Activated B cell treated with CpG ODN at 0.5 μM for 24 hours (primary cell): ENCODE measurements at regions of chr2 and their contacts with region 1.

Region 1: GRCh38 chr2:101697124-101698013 is at the start of gene MAP4K4:
- DNase-seq: peak; percentile 71
- ATAC-seq: peak; percentile 71
- H3K4me3 Mint-ChIP-seq: peak within 1 kb of the TSS; percentile 92
- H3K27ac Mint-ChIP-seq: peak within 1 kb of the TSS; percentile 91
- H3K4me1 Mint-ChIP-seq: peaks cover 8% of the 10 kb centered on the region
- H3K27me3 Mint-ChIP-seq: no peaks in the 10 kb centered on the region
- CTCF ChIP-seq: no peak
- total RNA-seq, gene MAP4K4: 211 and 232 TPM in 2 replicates

Region 2: DNA sequence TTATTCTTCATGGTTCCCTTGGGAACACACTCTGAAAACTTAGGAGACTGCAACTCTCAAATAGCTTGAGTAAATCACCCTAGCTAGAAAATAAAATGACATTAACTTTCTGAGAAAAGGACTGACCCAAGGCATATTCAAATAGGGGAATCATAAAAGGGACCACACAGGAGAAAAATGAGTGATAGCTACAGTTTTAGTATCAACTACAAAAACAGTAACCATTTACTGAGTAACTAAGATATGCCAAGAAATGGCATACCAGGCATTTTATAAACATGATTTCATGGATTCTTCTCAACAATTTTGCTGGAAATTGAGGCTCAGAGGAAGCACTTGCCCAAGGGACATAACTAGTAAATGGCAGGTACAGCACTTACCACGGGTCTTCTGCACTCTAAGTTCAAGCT is 1639.5 kb before region 1 on chr2:
- CTCF ChIA-PET with region 1: no interaction called
- POLR2A ChIA-PET with region 1: no interaction called
- intact Hi-C with region 1: no loop called
- DNase-seq: no peak
- ATAC-seq: no peak
- H3K4me3 Mint-ChIP-seq: no peak overlapping the region
- H3K27ac Mint-ChIP-seq: peak overlapping the region; percentile 35
- H3K4me1 Mint-ChIP-seq: peaks cover 69% of the 10 kb centered on the region
- H3K27me3 Mint-ChIP-seq: no peaks in the 10 kb centered on the region
- CTCF ChIP-seq: no peak

Region 3: GRCh38 chr2:101308432-101309210 is 388.7 kb before region 1 on chr2 and contains the start of gene RNF149:
- CTCF ChIA-PET with region 1: no interaction called
- POLR2A ChIA-PET with region 1: no interaction called
- intact Hi-C with region 1: loop called (anchors 5 kb)
- DNase-seq: peak; percentile 97
- ATAC-seq: peak; percentile 79
- H3K4me3 Mint-ChIP-seq: peak within 1 kb of the TSS; percentile 85
- H3K27ac Mint-ChIP-seq: peak within 1 kb of the TSS; percentile 90
- H3K4me1 Mint-ChIP-seq: peaks cover 54% of the 10 kb centered on the region
- H3K27me3 Mint-ChIP-seq: no peaks in the 10 kb centered on the region
- CTCF ChIP-seq: no peak
- total RNA-seq, gene RNF149: 39.6 and 48.3 TPM in 2 replicates

Region 4: GRCh38 chr2:101419096-101419663 is 278.2 kb before region 1 on chr2:
- CTCF ChIA-PET with region 1: interaction called, 5 read pairs
- POLR2A ChIA-PET with region 1: interaction called, 3 read pairs
- intact Hi-C with region 1: loop called (anchors 2 kb)
- DNase-seq: no peak
- ATAC-seq: peak; percentile 88
- H3K4me3 Mint-ChIP-seq: no peak overlapping the region
- H3K27ac Mint-ChIP-seq: no peak overlapping the region
- H3K4me1 Mint-ChIP-seq: peaks cover 6% of the 10 kb centered on the region
- H3K27me3 Mint-ChIP-seq: no peaks in the 10 kb centered on the region
- CTCF ChIP-seq: no peak

Region 5: DNA sequence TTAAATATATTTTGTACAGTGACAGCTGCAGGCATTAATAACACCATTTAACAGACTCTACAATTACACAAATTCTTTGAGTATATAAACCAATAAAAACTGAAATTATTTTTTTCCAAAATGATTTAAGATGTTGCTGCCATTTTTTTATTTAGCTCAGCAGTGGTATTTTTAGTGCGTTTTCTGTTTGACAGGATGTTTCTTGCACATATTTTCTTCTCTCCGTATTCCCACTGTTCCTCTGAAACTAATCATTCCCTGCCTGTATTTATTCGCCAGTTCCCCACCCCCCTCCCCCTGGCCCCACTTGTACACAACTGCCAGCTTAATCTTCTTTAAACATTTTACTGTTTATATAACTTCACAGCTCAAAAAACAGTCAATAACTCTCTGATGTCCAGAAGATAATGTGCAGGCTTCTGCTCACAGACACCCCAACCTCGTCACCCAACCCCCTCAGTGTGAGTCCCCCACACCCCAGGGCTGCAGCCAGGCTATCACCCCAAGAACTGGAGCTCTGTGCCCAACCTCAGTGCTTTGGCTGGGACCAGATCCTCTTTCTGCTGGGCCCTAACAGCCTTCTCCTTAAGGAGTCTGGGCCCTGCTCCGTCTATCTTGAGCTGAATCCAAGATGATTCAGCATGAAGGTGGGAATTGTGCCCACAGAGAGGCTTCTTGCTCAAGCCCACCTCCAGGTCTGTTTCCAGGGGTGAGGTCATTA is 41.5 kb before region 1 on chr2:
- CTCF ChIA-PET with region 1: no interaction called
- POLR2A ChIA-PET with region 1: interaction called, 6 read pairs
- intact Hi-C with region 1: loop called (anchors 2 kb)
- DNase-seq: no peak
- ATAC-seq: no peak
- H3K4me3 Mint-ChIP-seq: no peak overlapping the region
- H3K27ac Mint-ChIP-seq: peak overlapping the region; percentile 41
- H3K4me1 Mint-ChIP-seq: peaks cover 26% of the 10 kb centered on the region
- H3K27me3 Mint-ChIP-seq: no peaks in the 10 kb centered on the region
- CTCF ChIP-seq: no peak

Region 6: DNA sequence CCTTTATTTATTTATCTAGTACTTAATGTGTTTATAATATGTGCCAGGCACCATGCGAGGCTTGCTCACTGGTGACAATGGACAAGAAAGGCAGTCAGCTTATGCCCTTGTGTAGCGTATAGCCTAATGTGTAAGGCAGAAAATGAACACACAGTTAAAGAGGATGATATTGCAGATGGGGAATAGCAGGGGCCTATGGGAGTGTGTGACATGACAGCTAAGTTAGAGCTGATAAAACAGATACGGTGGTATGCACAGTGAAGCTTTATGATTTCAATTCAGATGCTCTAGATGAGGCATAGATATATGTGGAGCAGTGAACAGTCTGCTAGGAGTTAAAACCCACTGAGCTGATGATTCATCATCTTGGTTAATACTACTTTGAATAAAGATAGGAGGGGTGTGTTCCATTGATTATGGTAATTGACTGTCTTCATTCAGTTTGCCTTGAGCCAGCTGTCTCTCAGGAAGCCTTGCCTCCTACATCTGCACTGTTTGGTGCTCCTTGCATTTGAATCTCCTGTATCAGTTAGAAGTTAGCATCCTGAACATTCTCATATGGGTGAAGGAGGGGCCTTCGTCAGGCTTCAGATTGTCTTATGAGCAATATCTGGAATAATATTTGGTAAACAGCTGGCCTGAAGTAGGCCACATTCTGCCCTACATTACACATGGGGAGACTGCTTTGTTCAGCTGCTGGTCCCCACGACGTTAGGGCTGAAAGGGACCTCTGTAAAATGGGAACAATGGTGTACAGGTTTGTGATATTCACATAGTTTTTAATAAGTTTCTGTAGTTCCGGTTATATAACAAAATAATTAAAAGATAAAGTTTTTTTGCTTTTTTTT is 13.3 kb after region 1 on chr2:
- CTCF ChIA-PET with region 1: interaction called, 3 read pairs
- POLR2A ChIA-PET with region 1: interaction called, 87 read pairs
- intact Hi-C with region 1: loop called (anchors 1 kb)
- DNase-seq: no peak
- ATAC-seq: peak; percentile 78
- H3K4me3 Mint-ChIP-seq: peak overlapping the region; percentile 65
- H3K27ac Mint-ChIP-seq: peak overlapping the region; percentile 85
- H3K4me1 Mint-ChIP-seq: peaks cover 53% of the 10 kb centered on the region
- H3K27me3 Mint-ChIP-seq: no peaks in the 10 kb centered on the region
- CTCF ChIP-seq: no peak

Region 7: DNA sequence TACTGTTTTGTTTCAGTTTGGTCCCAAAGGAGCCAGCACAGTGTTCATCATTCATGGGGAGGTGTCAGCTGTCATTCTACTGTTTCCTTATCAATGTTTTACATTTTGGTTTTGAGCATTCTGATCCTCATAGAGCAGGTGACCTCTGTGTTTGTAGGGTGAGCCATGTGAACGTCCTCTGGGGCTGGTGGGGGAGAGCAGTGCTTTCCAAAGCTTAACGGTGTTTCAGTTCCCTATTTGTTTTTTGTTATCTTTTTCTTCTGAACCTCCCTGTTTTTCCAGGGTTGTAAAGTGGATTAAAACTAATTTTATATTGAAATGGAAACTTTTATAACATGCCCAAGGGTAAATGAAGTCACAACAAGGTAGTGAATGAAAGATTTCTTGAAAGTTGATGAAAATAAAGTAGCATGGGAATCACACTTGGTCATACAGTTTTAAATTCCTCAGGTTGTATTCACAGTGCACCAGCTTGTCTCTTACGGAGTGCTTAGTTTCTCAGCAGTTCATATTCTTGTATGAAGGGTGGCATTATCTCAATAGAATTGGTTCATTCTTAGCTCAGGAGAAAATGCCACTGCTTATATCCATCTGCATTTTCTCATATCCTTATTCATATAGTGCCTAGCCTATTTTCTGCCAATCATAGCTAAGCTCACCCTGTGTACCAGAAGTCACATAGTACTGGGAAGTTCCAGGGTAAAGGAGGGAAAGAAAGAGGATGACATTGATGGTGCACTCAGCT is 54.7 kb after region 1 on chr2:
- CTCF ChIA-PET with region 1: no interaction called
- POLR2A ChIA-PET with region 1: interaction called, 7 read pairs
- intact Hi-C with region 1: loop called (anchors 2 kb)
- DNase-seq: no peak
- ATAC-seq: peak; percentile 83
- H3K4me3 Mint-ChIP-seq: peak overlapping the region; percentile 65
- H3K27ac Mint-ChIP-seq: peak overlapping the region; percentile 76
- H3K4me1 Mint-ChIP-seq: peaks cover 81% of the 10 kb centered on the region
- H3K27me3 Mint-ChIP-seq: no peaks in the 10 kb centered on the region
- CTCF ChIP-seq: no peak

Region 8: GRCh38 chr2:101831351-101831865 is 134.0 kb after region 1 on chr2:
- CTCF ChIA-PET with region 1: interaction called, 6 read pairs
- POLR2A ChIA-PET with region 1: interaction called, 5 read pairs
- intact Hi-C with region 1: loop called (anchors 2 kb)
- DNase-seq: peak; percentile 37
- ATAC-seq: peak; percentile 82
- H3K4me3 Mint-ChIP-seq: no peak overlapping the region
- H3K27ac Mint-ChIP-seq: peak overlapping the region; percentile 56
- H3K4me1 Mint-ChIP-seq: peaks cover 49% of the 10 kb centered on the region
- H3K27me3 Mint-ChIP-seq: no peaks in the 10 kb centered on the region
- CTCF ChIP-seq: no peak